ENCODE measurements at regions of chr17 and their contacts with region 1.

Region 1: GRCh38 chr17:48335858-48336500 is 94.0 kb downstream of the SKAP1 start:
- DNase-seq: peak; percentile 37
- ATAC-seq: peak; percentile 75
- H3K4me3 ChIP-seq: no peak overlapping the region
- H3K27ac ChIP-seq: no peak overlapping the region
- H3K4me1 ChIP-seq: peaks cover 10% of the 10 kb centered on the region; the same call in 1 of the 2 replicates
- H3K27me3 ChIP-seq: no peaks in the 10 kb centered on the region
- CTCF ChIP-seq: peak; percentile 59 to 72 (median 65)
- EP300 ChIP-seq: no peak
- POLR2A ChIP-seq: no peak
- RAD21 ChIP-seq: peak; percentile 79

Region 2: DNA sequence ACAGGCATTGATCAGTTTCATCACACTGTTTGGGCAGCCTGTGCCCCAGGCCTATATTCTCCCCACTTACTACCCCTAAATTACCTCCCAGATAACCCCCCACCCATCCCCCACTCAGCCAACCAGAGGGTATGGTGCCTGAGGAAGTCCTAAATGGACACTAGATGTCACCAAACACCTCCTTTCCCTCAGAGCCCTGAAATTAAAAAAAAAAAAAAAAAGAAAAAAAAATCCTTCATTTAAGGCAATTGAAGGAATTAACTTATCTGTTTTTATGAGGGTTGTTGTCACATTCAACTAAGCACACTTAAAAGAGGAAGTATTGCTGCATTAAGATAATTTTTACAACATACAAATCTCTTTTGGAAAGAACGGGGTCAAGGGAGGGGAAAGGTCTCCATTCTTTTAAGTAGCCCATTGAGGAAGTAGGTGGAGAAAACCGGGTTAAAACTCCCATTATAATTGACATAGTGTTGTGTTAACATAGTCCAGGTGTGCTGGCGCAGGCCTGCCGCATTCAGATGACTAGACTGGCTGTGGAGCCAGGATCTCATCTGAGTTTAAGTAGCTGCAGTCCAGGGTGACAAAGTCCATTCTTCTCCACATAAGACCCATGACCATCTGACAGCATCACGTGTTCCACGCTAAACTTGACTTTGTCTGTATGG is 182.2 kb before region 1 on chr17:
- CTCF ChIA-PET with region 1: no interaction called
- POLR2A ChIA-PET with region 1: no interaction called
- RAD21 ChIA-PET with region 1: no interaction called
- SMC1A ChIA-PET with region 1: no interaction called
- in situ Hi-C with region 1: no loop called
- intact Hi-C with region 1: loop called (anchors 10 kb)
- DNase-seq: no peak
- ATAC-seq: peak; percentile 48; the same call in 2 of the 3 replicates
- H3K4me3 ChIP-seq: no peak overlapping the region
- H3K27ac ChIP-seq: no peak overlapping the region
- H3K4me1 ChIP-seq: no peaks in the 10 kb centered on the region
- H3K27me3 ChIP-seq: no peaks in the 10 kb centered on the region
- CTCF ChIP-seq: peak; percentile 25 to 34 (median 26); a peak in 4 of 6 replicates
- EP300 ChIP-seq: no peak
- POLR2A ChIP-seq: no peak
- RAD21 ChIP-seq: peak; percentile 64

Region 3: DNA sequence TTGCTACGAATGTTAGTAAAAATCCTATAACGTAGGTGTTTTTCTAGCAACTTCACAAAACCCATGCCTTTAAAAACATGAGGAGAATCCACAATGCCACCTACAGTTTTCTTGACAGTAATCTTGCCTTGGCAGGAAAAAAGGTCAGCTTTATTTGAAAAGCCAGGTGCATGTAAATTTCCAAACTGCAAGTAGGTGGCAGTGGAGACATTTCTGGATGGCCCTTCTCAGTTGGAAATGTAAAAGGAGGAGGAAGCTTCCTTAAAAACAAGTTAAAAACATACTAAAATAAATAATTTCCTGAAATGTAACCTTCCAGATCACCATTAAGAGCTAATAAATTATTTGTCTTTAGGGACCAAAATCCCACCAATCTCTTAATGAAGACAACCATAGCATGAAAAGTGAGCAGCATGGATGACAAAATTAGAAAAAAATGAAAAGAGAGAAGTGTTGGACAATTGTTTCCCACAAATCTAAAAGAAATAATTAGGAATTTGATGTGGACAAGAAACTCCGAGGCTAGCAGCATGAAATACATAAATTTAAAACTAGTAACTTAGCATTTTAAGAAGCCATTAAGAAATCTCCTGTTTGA is 76.2 kb before region 1 on chr17:
- CTCF ChIA-PET with region 1: interaction called, 107 read pairs
- POLR2A ChIA-PET with region 1: interaction called, 3 read pairs
- RAD21 ChIA-PET with region 1: interaction called, 89 read pairs
- SMC1A ChIA-PET with region 1: interaction called, 51 read pairs
- in situ Hi-C with region 1: no loop called
- intact Hi-C with region 1: loop called (anchors 10 kb)
- DNase-seq: no peak
- ATAC-seq: no peak
- H3K4me3 ChIP-seq: no peak overlapping the region
- H3K27ac ChIP-seq: no peak overlapping the region
- H3K4me1 ChIP-seq: no peaks in the 10 kb centered on the region
- H3K27me3 ChIP-seq: no peaks in the 10 kb centered on the region
- CTCF ChIP-seq: peak; percentile 47 to 62 (median 61)
- EP300 ChIP-seq: no peak
- POLR2A ChIP-seq: no peak
- RAD21 ChIP-seq: peak; percentile 77

Region 4: GRCh38 chr17:48307814-48308411 is 28.1 kb before region 1 on chr17:
- CTCF ChIA-PET with region 1: interaction called, 69 read pairs
- POLR2A ChIA-PET with region 1: no interaction called
- RAD21 ChIA-PET with region 1: interaction called, 19 read pairs
- SMC1A ChIA-PET with region 1: interaction called, 16 read pairs
- in situ Hi-C with region 1: no loop called
- intact Hi-C with region 1: no loop called
- DNase-seq: no peak
- ATAC-seq: peak; percentile 98
- H3K4me3 ChIP-seq: no peak overlapping the region
- H3K27ac ChIP-seq: no peak overlapping the region
- H3K4me1 ChIP-seq: peaks cover 8% of the 10 kb centered on the region; the same call in 1 of the 2 replicates
- H3K27me3 ChIP-seq: no peaks in the 10 kb centered on the region
- CTCF ChIP-seq: peak; percentile 69 to 89 (median 86)
- EP300 ChIP-seq: no peak
- POLR2A ChIP-seq: no peak
- RAD21 ChIP-seq: peak; percentile 66

Region 5: GRCh38 chr17:48374650-48375230 is 38.8 kb after region 1 on chr17:
- CTCF ChIA-PET with region 1: interaction called, 10 read pairs
- POLR2A ChIA-PET with region 1: no interaction called
- RAD21 ChIA-PET with region 1: interaction called, 4 read pairs
- SMC1A ChIA-PET with region 1: interaction called, 3 read pairs
- in situ Hi-C with region 1: no loop called
- intact Hi-C with region 1: no loop called
- DNase-seq: no peak
- ATAC-seq: peak; percentile 92
- H3K4me3 ChIP-seq: no peak overlapping the region
- H3K27ac ChIP-seq: no peak overlapping the region
- H3K4me1 ChIP-seq: no peaks in the 10 kb centered on the region
- H3K27me3 ChIP-seq: no peaks in the 10 kb centered on the region
- CTCF ChIP-seq: peak; percentile 21 to 64 (median 54); a peak in 5 of 6 replicates
- EP300 ChIP-seq: no peak
- POLR2A ChIP-seq: no peak
- RAD21 ChIP-seq: peak; percentile 63

Region 6: GRCh38 chr17:48472411-48473281 is 136.7 kb after region 1 on chr17:
- CTCF ChIA-PET with region 1: interaction called, 16 read pairs
- POLR2A ChIA-PET with region 1: interaction called, 5 read pairs
- RAD21 ChIA-PET with region 1: interaction called, 6 read pairs
- SMC1A ChIA-PET with region 1: interaction called, 10 read pairs
- in situ Hi-C with region 1: no loop called
- intact Hi-C with region 1: no loop called
- DNase-seq: no peak
- ATAC-seq: peak; percentile 95
- H3K4me3 ChIP-seq: 0 out of 2 replicates have a peak overlapping the region, but pooled peaks have one; percentile 17
- H3K27ac ChIP-seq: no peak overlapping the region
- H3K4me1 ChIP-seq: peaks cover 16% of the 10 kb centered on the region
- H3K27me3 ChIP-seq: no peaks in the 10 kb centered on the region
- CTCF ChIP-seq: no peak
- EP300 ChIP-seq: peak; percentile 36 to 55; a peak in 1 of 4 replicates
- POLR2A ChIP-seq: no peak
- RAD21 ChIP-seq: no peak

Region 7: DNA sequence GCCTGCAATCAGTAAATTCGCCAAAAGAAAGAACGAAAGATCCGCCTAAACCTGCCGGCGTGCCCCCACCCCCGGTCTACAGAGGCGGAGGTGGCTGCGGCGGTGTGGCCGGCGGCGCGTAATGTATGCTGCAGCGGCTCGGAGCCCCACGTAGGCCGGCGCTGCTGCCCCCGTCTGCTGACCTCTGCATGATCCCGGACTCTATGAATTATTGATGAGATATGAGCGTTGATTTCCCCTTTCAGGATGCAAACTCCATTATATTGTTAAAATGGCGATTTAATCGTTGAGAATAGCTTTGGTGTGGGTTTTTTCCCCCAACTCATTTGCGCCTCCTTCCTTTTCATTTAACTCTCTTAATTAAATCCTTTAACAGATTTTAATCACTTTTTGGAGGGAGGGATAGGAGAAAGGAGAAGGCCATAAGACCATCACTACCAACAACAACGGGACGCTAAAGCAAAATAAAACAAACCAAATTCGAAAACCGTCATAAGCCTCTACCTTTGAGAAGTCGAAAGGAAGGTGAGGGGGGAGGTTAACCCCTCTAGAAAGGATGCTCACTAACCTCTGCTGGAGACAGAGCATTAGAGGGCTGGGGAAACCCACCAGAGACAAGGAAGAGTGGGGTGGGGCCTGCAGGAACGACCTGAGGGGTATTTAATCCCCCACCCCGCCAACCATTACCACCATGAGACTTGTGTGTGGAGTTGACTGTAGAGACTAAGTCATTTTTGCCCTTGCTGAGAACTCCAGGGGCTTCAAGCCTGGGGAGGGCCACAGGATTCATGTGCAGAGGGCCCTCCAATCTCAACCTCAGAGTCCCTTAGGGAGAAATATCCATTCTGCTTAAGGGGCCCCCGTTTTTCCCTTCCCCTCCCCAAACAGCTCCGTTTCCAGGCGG is 250.6 kb after region 1 on chr17:
- CTCF ChIA-PET with region 1: interaction called, 10 read pairs
- POLR2A ChIA-PET with region 1: no interaction called
- RAD21 ChIA-PET with region 1: interaction called, 9 read pairs
- SMC1A ChIA-PET with region 1: interaction called, 47 read pairs
- in situ Hi-C with region 1: no loop called
- intact Hi-C with region 1: no loop called
- DNase-seq: no peak
- ATAC-seq: peak; percentile 59
- H3K4me3 ChIP-seq: peak overlapping the region; percentile 64
- H3K27ac ChIP-seq: no peak overlapping the region
- H3K4me1 ChIP-seq: peaks cover 3% of the 10 kb centered on the region
- H3K27me3 ChIP-seq: peaks cover 0 to 4% of the 10 kb centered on the region in 2 experiments; a peak in 1 of 4 replicates
- CTCF ChIP-seq: no peak
- EP300 ChIP-seq: no peak
- POLR2A ChIP-seq: no peak
- RAD21 ChIP-seq: no peak